Breast epithelium (tissue), 4 donors: ENCODE measurements at regions of chr16 and their contacts with region 1.

Region 1: DNA sequence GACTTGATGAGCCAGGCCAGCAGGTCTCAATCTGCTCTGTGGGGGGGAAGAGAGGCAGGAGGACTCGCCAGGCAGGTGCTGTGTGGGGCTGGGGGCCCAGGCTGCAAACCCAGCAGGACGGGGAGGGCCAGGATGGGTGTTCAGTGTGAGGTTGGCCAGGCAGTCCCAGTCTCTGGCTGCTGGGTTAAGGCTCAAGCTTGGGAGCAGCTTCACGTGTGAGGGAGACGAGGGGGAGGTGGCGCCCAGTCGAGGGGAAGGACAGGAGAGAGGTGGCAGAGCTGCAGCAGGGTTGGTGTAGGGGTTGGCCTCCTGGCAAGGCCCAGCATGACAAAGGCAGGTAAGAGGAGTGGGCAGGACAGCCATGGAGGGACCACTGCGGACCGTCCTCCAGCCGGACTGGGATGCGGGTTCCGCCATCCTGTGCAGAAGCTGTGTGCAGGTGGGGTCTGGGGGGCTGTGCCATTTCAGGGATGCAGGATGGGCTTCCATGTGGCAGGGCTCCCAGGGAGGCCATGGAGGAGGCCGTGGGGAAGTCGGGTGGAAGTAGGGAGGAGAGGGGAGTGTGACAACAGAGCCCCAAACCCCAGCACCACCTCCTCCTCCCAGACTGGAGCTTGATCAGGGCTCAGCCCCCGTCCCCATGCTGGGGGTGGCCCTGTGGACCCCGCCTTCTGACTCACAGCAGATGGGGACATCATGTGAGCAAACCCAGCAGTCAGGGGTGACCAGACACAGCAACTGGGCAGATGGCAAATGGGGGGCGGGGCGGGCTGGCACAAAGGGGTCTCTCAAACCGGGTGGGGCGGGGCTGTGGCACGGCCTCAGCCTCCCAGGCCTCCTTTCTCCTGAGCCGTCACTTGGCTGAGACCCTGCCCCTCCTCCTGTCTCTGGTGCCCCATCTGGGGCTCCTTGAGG is 2.8 kb downstream of the ADGRG1 start:
- DNase-seq: no peak
- H3K4me3 ChIP-seq: peak overlapping the region; percentile 30 to 61 (median 37)
- H3K27ac ChIP-seq: peak overlapping the region; percentile 79 to 81
- H3K4me1 ChIP-seq: peaks cover 8 to 29% of the 10 kb centered on the region in 2 donors
- H3K27me3 ChIP-seq: no peaks in the 10 kb centered on the region
- CTCF ChIP-seq: no peak
- POLR2A ChIP-seq: no peak

Region 2: DNA sequence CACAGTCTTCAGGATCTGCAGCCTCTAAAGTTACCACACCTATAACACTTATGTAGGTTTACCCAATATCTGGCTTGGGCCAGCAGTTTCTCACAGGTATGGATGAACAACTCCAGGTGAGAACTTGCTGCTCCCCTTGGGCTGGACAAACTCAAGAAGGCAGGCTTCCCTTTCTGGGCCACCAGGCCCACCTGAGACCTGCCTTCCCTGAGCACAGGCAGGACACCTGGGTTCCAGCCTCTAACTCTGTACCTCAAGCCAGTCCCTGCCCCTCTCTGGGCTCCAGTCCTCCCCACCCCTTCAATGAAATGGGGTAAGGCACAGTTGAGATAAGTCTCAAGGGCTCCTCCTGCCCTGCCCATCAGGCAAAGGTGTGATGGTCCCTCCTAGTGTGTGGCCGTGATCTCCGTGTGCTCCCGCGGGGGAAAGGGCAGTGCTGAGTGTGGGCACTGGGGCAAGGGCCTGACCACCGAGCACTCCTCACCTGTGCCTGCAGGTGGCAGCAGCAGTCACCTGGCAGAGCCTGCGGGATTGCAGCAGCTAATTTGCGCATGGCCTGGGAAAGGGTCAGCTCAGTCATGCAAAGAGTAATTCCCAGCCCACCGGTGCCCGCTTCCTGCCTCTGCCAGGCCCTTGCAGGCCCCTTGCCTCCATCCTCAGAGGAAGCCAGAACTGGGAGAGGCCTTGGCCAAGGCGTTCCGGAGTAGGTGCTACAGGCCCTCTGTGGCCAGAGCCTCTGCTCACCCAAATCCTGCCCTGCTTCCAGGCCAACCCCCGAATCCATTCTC is 30.9 kb before region 1 on chr16:
- intact Hi-C with region 1: loop called (anchors 1 kb)
- DNase-seq: peak in 1 of 2 donors; percentile 73
- H3K4me3 ChIP-seq: no peak overlapping the region
- H3K27ac ChIP-seq: no peak overlapping the region
- H3K4me1 ChIP-seq: no peaks in the 10 kb centered on the region
- H3K27me3 ChIP-seq: no peaks in the 10 kb centered on the region
- CTCF ChIP-seq: peak; percentile 48 to 92 (median 65)
- POLR2A ChIP-seq: no peak